ENCODE measurements at regions of chr14 and their contacts with region 1.

Region 1: GRCh38 chr14:33972583-33973081 is 21.8 kb upstream of the EGLN3 start:
- DNase-seq: peak; percentile 61
- ATAC-seq: peak; percentile 98
- H3K4me3 ChIP-seq: 0 out of 2 replicates have a peak overlapping the region, but pooled peaks have one; percentile 24
- H3K27ac ChIP-seq: peak overlapping the region; percentile 68
- H3K4me1 ChIP-seq: peaks cover 15% of the 10 kb centered on the region
- H3K27me3 ChIP-seq: no peaks in the 10 kb centered on the region
- CTCF ChIP-seq: no peak
- EP300 ChIP-seq: peak; percentile 20 to 43; a peak in 2 of 4 replicates
- POLR2A ChIP-seq: no peak
- RAD21 ChIP-seq: no peak

Region 2: GRCh38 chr14:33810308-33810707 is 162.3 kb before region 1 on chr14:
- CTCF ChIA-PET with region 1: no interaction called
- POLR2A ChIA-PET with region 1: no interaction called
- RAD21 ChIA-PET with region 1: no interaction called
- SMC1A ChIA-PET with region 1: no interaction called
- in situ Hi-C with region 1: no loop called
- intact Hi-C with region 1: no loop called
- DNase-seq: no peak
- ATAC-seq: no peak
- H3K4me3 ChIP-seq: no peak overlapping the region
- H3K27ac ChIP-seq: no peak overlapping the region
- H3K4me1 ChIP-seq: no peaks in the 10 kb centered on the region
- H3K27me3 ChIP-seq: peaks cover 0 to 3% of the 10 kb centered on the region in 2 experiments; a peak in 1 of 4 replicates
- CTCF ChIP-seq: no peak
- EP300 ChIP-seq: no peak
- POLR2A ChIP-seq: no peak
- RAD21 ChIP-seq: no peak

Region 3: GRCh38 chr14:33891700-33892099 is 80.9 kb before region 1 on chr14:
- CTCF ChIA-PET with region 1: no interaction called
- POLR2A ChIA-PET with region 1: no interaction called
- RAD21 ChIA-PET with region 1: no interaction called
- SMC1A ChIA-PET with region 1: no interaction called
- in situ Hi-C with region 1: no loop called
- intact Hi-C with region 1: no loop called
- DNase-seq: no peak
- ATAC-seq: no peak
- H3K4me3 ChIP-seq: no peak overlapping the region
- H3K27ac ChIP-seq: no peak overlapping the region
- H3K4me1 ChIP-seq: no peaks in the 10 kb centered on the region
- H3K27me3 ChIP-seq: no peaks in the 10 kb centered on the region
- CTCF ChIP-seq: no peak
- EP300 ChIP-seq: no peak
- POLR2A ChIP-seq: no peak
- RAD21 ChIP-seq: no peak

Region 4: DNA sequence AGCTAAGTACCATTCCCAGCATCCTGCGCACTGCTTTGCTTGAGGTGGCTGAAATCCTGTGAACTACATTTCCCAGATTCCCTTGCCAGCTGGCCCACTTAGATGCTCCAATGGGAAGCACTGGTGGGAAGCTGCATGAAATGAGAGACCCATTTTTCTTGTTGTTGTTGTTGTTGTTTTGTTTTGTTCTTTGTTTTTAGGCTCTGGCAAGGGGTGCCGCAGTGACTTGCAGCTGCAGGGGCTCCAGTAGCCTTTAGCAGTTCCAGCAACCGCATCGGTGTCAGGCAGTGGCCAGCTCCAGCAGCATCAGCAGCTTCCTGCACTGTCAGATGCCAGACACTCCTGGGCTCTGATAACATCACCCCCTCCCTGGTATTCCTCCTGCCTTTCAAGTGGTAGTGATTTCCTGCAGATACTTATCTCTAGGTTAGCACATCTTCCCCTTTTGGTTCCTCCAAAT is 12.9 kb before region 1 on chr14:
- CTCF ChIA-PET with region 1: interaction called, 8 read pairs
- POLR2A ChIA-PET with region 1: interaction called, 9 read pairs
- RAD21 ChIA-PET with region 1: interaction called, 14 read pairs
- SMC1A ChIA-PET with region 1: interaction called, 13 read pairs
- in situ Hi-C with region 1: no loop called
- intact Hi-C with region 1: no loop called
- DNase-seq: no peak
- ATAC-seq: no peak
- H3K4me3 ChIP-seq: no peak overlapping the region
- H3K27ac ChIP-seq: no peak overlapping the region
- H3K4me1 ChIP-seq: peaks cover 15% of the 10 kb centered on the region
- H3K27me3 ChIP-seq: no peaks in the 10 kb centered on the region
- CTCF ChIP-seq: no peak
- EP300 ChIP-seq: no peak
- POLR2A ChIP-seq: no peak
- RAD21 ChIP-seq: no peak

Region 5: DNA sequence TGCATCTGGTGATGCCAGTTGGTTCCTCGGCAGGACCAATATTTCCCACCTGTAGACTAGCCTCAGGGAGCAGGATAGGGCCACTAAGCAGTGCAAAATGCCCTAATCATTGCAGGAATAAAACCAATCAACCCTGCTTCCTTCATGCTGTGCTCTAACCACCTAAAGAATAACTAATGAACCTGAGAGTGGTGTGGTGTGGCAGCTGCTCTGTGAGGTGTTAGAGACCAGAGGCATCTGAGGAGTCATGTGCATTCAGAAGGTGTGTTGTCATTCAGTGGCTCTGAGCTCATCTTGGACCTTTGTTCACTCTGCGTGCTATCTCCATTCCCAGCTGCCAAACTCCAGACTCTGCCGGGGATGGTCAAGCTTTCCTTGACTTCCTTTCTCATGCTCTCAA is 114.9 kb after region 1 on chr14:
- CTCF ChIA-PET with region 1: no interaction called
- POLR2A ChIA-PET with region 1: no interaction called
- RAD21 ChIA-PET with region 1: no interaction called
- SMC1A ChIA-PET with region 1: no interaction called
- in situ Hi-C with region 1: no loop called
- intact Hi-C with region 1: loop called (anchors 5 kb)
- DNase-seq: no peak
- ATAC-seq: peak; percentile 86
- H3K4me3 ChIP-seq: no peak overlapping the region
- H3K27ac ChIP-seq: no peak overlapping the region
- H3K4me1 ChIP-seq: no peaks in the 10 kb centered on the region
- H3K27me3 ChIP-seq: no peaks in the 10 kb centered on the region
- CTCF ChIP-seq: no peak
- EP300 ChIP-seq: no peak
- POLR2A ChIP-seq: no peak
- RAD21 ChIP-seq: no peak

Measured in GM12878 (cell line).